ENCODE measurements at regions of chr2 and their contacts with region 1.

Region 1: DNA sequence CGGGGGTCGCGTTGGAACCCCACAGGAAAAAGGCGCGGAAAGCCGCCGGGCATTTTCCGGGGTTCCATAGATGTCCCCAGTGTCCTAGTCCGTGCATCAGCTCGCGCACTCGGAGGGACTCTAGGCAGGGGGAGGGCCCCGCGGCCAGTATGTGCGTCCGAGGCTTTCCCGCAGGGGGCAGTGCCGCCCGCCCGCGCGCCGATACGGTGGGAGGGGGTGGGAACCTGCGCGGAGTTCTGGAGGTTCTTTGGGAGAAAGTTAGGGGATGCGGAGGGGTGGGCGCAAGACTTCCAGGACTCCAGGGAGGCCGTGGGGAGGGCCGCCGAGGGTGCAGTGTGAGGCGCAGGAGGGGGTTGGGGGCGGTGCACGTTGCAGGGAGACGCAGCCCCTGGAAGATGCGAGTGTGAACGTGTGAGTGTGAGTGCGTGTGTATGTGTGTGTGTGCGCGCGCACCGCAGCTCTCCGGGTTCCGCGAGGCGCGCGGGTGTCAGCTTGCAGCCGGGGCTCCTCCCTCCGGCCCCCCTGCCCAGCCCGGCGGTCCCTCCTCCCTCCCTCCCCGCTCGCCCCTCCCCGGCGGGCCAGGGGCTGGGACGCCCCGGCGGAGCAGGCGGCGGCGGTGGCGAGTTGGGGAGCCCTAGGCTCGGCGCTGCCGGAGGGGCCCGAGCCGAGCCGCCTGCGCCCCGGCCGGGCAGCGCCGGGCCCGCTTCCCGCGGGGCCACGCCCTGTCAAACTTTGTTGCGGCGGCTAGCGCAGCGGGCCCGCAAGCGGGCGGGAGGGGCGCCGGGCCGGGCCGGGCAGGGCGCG is at the start of gene TCF7L1:
- DNase-seq: peak; percentile 84 to 96 (median 93)
- ATAC-seq: peak; percentile 94
- H3K4me3 ChIP-seq: peak within 1 kb of the TSS; percentile 62 to 82
- H3K27ac ChIP-seq: peak within 1 kb of the TSS; percentile 62 to 75
- H3K4me1 ChIP-seq: peaks cover 4 to 18% of the 10 kb centered on the region in 2 donors
- H3K27me3 ChIP-seq: peaks cover 0 to 60% of the 10 kb centered on the region in 2 donors
- CTCF ChIP-seq: peak; percentile 76 to 85
- polyA plus RNA-seq, gene TCF7L1: 53.2 to 63.9 (median 59.4) TPM

Region 2: DNA sequence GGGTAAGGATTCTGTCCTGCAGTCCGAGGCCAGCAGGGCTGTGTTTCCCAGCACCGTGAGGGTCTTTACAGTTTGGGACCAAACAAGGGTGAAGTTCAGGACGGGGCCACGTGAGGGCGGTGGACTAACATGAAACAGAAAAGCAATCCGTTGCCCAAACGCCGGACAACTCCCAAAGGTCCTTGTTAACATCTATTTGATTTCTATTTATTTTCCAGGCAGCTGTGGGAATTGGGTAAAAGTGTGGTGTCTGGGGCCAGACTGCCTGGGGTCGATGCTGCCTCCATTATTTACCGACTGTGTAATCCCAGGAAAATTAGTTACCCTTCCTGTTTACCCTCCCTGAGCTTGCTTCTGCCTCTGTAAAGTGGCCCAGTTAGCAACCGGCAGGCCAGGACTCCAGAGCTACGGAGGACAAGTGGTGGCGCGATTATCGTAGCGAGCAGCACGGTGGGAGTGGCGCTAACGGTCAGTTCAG is 66.1 kb before region 1 on chr2:
- intact Hi-C with region 1: no loop called
- DNase-seq: peak in 3 of 4 donors; percentile 64 to 83 (median 65)
- ATAC-seq: peak; percentile 95
- H3K4me3 ChIP-seq: no peak overlapping the region
- H3K27ac ChIP-seq: no peak overlapping the region
- H3K4me1 ChIP-seq: peaks cover 0 to 6% of the 10 kb centered on the region in 2 donors
- H3K27me3 ChIP-seq: peaks cover 0 to 6% of the 10 kb centered on the region in 2 donors
- CTCF ChIP-seq: peak; percentile 71 to 87

Region 3: GRCh38 chr2:85282914-85283313 is 149.9 kb after region 1 on chr2:
- intact Hi-C with region 1: loop called in 1 of 2 experiments (anchors 5 kb)
- DNase-seq: no peak
- ATAC-seq: no peak
- H3K4me3 ChIP-seq: no peak overlapping the region
- H3K27ac ChIP-seq: no peak overlapping the region
- H3K4me1 ChIP-seq: peaks cover 0 to 17% of the 10 kb centered on the region in 2 donors
- H3K27me3 ChIP-seq: no peaks in the 10 kb centered on the region
- CTCF ChIP-seq: no peak

Region 4: DNA sequence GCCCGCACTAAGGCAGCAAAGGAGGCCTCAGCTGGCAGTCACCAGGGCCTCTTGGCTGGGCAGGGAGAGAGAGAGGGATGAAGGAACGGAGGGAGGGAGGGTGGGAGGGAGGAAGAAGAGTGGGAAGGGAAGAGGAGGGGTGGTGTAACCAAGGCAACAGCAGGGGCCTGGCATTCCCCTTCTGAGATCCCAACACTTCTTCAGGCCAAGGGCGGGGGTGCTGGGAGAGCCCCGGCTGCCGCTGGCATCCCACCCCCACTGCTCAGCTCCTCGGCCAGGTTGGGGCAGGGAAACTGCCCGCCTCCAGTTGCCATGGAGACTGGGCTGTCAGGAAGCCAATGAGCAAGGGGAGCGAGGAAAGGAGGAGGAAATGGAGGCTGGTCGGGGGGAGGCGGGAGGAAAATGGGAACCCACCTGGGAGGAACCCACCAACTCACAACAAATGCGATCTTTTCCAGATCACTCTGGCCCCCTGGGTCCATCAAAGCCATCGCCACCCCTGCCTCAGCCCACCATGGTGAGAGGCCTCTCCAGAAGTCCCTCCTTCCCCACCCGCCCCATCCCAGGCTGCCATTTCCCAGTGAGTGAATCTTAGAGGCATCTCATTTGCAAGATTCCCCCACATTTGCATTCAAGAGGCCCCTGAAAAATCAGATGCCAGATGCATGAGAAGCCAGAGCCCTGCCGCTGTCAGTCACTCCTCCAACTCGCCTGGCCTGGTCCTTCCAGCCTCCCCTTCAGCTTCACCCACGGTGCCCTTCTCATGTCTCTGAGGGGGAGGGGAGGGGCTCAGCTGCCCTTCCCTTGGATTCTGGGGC is 297.9 kb after region 1 on chr2:
- intact Hi-C with region 1: no loop called
- DNase-seq: no peak
- ATAC-seq: no peak
- H3K4me3 ChIP-seq: no peak overlapping the region
- H3K27ac ChIP-seq: no peak overlapping the region
- H3K4me1 ChIP-seq: peaks cover 6 to 50% of the 10 kb centered on the region in 2 donors
- H3K27me3 ChIP-seq: no peaks in the 10 kb centered on the region
- CTCF ChIP-seq: no peak

Region 5: GRCh38 chr2:85444629-85445028 is 311.6 kb after region 1 on chr2:
- intact Hi-C with region 1: no loop called
- DNase-seq: no peak
- ATAC-seq: no peak
- H3K4me3 ChIP-seq: no peak overlapping the region
- H3K27ac ChIP-seq: no peak overlapping the region
- H3K4me1 ChIP-seq: peaks cover 0 to 4% of the 10 kb centered on the region in 2 donors
- H3K27me3 ChIP-seq: no peaks in the 10 kb centered on the region
- CTCF ChIP-seq: no peak